Endothelial cell of umbilical vein (primary cell): ENCODE measurements at regions of chr3 and their contacts with region 1.

Region 1: GRCh38 chr3:115239717-115240116 is 92.6 kb upstream of the ZBTB20 start:
- DNase-seq: peak; percentile 99
- H3K4me3 ChIP-seq: no peak overlapping the region
- H3K27ac ChIP-seq: peak overlapping the region; percentile 70
- H3K4me1 ChIP-seq: peaks cover 20% of the 10 kb centered on the region
- H3K27me3 ChIP-seq: no peaks in the 10 kb centered on the region
- CTCF ChIP-seq: no peak
- POLR2A ChIP-seq: no peak

Region 2: DNA sequence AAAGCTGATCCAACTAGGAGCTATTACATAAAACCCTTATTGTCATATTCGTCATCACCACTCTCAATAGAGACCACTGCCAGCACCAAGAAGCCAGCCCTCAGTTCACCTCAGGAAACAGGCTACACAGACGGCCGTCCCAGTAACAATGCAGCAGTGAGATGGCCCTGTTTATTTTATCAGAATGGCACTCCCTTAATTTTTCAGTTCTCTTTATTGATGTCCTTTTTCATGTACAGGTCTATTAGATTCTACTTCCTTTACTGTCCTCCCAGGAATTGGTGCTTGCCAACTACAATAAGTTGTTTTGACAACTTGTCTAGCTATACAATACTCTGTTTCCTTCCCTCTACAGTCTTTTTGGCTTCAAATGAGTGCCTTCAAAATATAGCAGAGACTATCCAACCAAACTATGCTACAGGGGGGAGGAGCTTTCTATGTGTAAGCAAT is 365.2 kb before region 1 on chr3:
- CTCF ChIA-PET with region 1: no interaction called
- POLR2A ChIA-PET with region 1: no interaction called
- dilution Hi-C with region 1: no loop called
- intact Hi-C with region 1: no loop called
- DNase-seq: peak; percentile 62
- H3K4me3 ChIP-seq: no peak overlapping the region
- H3K27ac ChIP-seq: no peak overlapping the region
- H3K4me1 ChIP-seq: peaks cover 7% of the 10 kb centered on the region
- H3K27me3 ChIP-seq: no peaks in the 10 kb centered on the region
- CTCF ChIP-seq: no peak
- POLR2A ChIP-seq: no peak

Region 3: GRCh38 chr3:115350606-115351005 is 110.9 kb after region 1 on chr3:
- CTCF ChIA-PET with region 1: no interaction called
- POLR2A ChIA-PET with region 1: no interaction called
- dilution Hi-C with region 1: no loop called
- intact Hi-C with region 1: loop called (anchors 1 kb)
- DNase-seq: peak; percentile 86
- H3K4me3 ChIP-seq: no peak overlapping the region
- H3K27ac ChIP-seq: no peak overlapping the region
- H3K4me1 ChIP-seq: peaks cover 26% of the 10 kb centered on the region
- H3K27me3 ChIP-seq: no peaks in the 10 kb centered on the region
- CTCF ChIP-seq: no peak
- POLR2A ChIP-seq: no peak